ENCODE measurements at regions of chr1 and their contacts with region 1.

Region 1: DNA sequence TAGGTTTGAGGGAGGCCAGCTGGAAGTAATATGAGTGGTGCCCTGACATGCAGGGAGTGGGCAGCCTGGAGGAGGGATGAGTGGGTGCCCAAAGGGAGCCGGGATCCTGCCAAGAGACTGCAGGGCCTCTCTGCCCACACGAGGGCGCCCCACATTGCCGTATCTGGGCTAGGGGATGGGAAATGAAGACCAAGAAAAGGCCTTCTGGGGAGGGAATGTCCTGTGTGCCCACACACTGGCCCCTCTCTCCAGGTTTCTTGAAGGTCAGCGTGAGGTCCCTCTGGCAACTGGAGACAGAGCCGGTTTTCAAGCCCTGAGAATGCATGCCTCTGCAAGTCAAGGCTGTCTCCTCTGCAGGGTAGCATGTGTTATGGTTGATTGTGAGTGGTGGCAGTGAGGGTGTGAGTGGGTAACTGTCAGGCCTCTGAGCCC is 94.1 kb upstream of the PPM1J start:
- DNase-seq: peak; percentile 50 to 96 (median 84)

Region 2: GRCh38 chr1:112882271-112882744 is 73.0 kb after region 1 on chr1:
- intact Hi-C with region 1: loop called (anchors 5 kb)
- DNase-seq: peak in 3 of 10 donors; percentile 13 to 86 (median 83)

Measured in posterior cingulate gyrus (tissue), 11 donors.